MCF 10A (cell line): ENCODE measurements at regions of chr12 and their contacts with region 1.

Region 1: GRCh38 chr12:8709124-8709830 is 11.5 kb downstream of the RIMKLB start:
- DNase-seq: no peak
- H3K4me3 Mint-ChIP-seq: peak overlapping the region; percentile 52
- H3K27ac Mint-ChIP-seq: peak overlapping the region; percentile 27
- H3K4me1 Mint-ChIP-seq: no peaks in the 10 kb centered on the region
- H3K27me3 Mint-ChIP-seq: no peaks in the 10 kb centered on the region
- CTCF ChIP-seq: no peak

Region 2: DNA sequence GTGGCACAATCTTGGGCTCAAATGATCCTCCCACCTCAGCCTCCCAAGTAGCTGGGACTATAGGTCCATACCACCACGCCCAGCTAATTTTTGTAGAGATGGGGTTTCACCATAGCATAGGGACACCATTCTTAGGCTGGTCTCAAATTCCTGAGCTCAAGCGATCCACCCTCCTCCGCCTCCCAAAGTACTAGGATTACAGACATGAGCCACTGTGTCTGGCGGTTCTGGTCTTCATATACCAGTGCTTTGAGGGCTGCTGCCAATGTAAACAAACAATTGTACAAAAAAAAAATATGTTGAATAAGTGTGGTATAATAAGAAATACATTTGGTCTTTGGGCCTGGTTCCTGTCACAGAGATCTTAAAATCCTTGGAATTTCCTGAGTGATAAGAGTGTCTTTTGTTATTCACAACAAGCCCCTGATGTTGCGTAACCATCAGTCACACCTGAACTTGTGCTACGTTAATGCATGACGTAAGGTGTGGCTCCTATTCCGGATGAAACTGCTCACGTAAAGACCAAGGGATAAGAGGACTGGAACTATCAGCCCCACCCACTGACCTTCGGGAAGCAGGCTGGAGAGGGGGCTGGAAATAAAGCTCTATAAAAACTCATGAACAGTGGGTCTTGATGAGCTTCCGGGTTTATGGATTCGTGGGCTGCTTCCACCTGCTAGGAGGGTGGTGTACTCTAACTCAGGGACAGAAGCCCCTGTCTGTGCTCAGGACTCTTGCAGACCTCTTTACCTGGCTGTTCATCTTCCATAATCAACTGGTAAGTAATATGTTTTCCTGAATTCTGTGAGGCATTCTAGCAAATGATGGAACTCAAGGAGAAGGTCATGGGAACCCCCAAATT is 28.0 kb before region 1 on chr12:
- CTCF ChIA-PET with region 1: interaction called, 10 read pairs
- POLR2A ChIA-PET with region 1: interaction called, 3 read pairs
- intact Hi-C with region 1: no loop called
- DNase-seq: peak; percentile 79
- H3K4me3 Mint-ChIP-seq: peak overlapping the region; percentile 67
- H3K27ac Mint-ChIP-seq: peak overlapping the region; percentile 63
- H3K4me1 Mint-ChIP-seq: peaks cover 19% of the 10 kb centered on the region
- H3K27me3 Mint-ChIP-seq: no peaks in the 10 kb centered on the region
- CTCF ChIP-seq: no peak